ENCODE measurements at regions of chr12 and their contacts with region 1.

Region 1: GRCh38 chr12:53213348-53213747 is 6.3 kb upstream of the ITGB7 start:
- DNase-seq: peak; percentile 77 to 84 (median 78)
- H3K4me3 ChIP-seq: no peak overlapping the region
- H3K4me3 Mint-ChIP-seq: peak overlapping the region in 1 of 8 donors; percentile 41
- H3K27ac ChIP-seq: peak overlapping the region; percentile 36
- H3K27ac Mint-ChIP-seq: peak overlapping the region; percentile 46 to 97 (median 87)
- H3K4me1 ChIP-seq: peaks cover 84% of the 10 kb centered on the region
- H3K4me1 Mint-ChIP-seq: peaks cover 45 to 81% (median 68%) of the 10 kb centered on the region in 4 donors
- H3K27me3 ChIP-seq: no peaks in the 10 kb centered on the region
- H3K27me3 Mint-ChIP-seq: no peaks in the 10 kb centered on the region

Region 2: GRCh38 chr12:53115112-53115890 is 98.0 kb before region 1 on chr12:
- CTCF ChIA-PET with region 1: no interaction called
- POLR2A ChIA-PET with region 1: no interaction called
- intact Hi-C with region 1: no loop called
- DNase-seq: no peak
- H3K4me3 ChIP-seq: no peak overlapping the region
- H3K4me3 Mint-ChIP-seq: no peak overlapping the region
- H3K27ac ChIP-seq: no peak overlapping the region
- H3K27ac Mint-ChIP-seq: no peak overlapping the region
- H3K4me1 ChIP-seq: no peaks in the 10 kb centered on the region
- H3K4me1 Mint-ChIP-seq: no peaks in the 10 kb centered on the region
- H3K27me3 ChIP-seq: no peaks in the 10 kb centered on the region
- H3K27me3 Mint-ChIP-seq: no peaks in the 10 kb centered on the region

Region 3: GRCh38 chr12:53200458-53201176 is 12.7 kb before region 1 on chr12:
- CTCF ChIA-PET with region 1: interaction called, 27 read pairs
- POLR2A ChIA-PET with region 1: interaction called, 175 read pairs
- intact Hi-C with region 1: no loop called
- DNase-seq: no peak
- H3K4me3 ChIP-seq: peak overlapping the region; percentile 12 to 29
- H3K4me3 Mint-ChIP-seq: peak overlapping the region; percentile 66 to 89 (median 73)
- H3K27ac ChIP-seq: peak overlapping the region; percentile 41
- H3K27ac Mint-ChIP-seq: peak overlapping the region; percentile 73 to 95 (median 86)
- H3K4me1 ChIP-seq: peaks cover 95% of the 10 kb centered on the region
- H3K4me1 Mint-ChIP-seq: peaks cover 48 to 84% (median 66%) of the 10 kb centered on the region in 4 donors
- H3K27me3 ChIP-seq: no peaks in the 10 kb centered on the region
- H3K27me3 Mint-ChIP-seq: no peaks in the 10 kb centered on the region

Region 4: GRCh38 chr12:53241623-53242412 is 28.5 kb after region 1 on chr12:
- CTCF ChIA-PET with region 1: interaction called, 17 read pairs
- POLR2A ChIA-PET with region 1: interaction called, 333 read pairs
- intact Hi-C with region 1: no loop called
- DNase-seq: no peak
- H3K4me3 ChIP-seq: no peak overlapping the region
- H3K4me3 Mint-ChIP-seq: no peak overlapping the region
- H3K27ac ChIP-seq: no peak overlapping the region
- H3K27ac Mint-ChIP-seq: peak overlapping the region in 3 of 7 donors; percentile 48 to 83 (median 52)
- H3K4me1 ChIP-seq: peaks cover 10% of the 10 kb centered on the region
- H3K4me1 Mint-ChIP-seq: peaks cover 10 to 16% (median 14%) of the 10 kb centered on the region in 4 donors
- H3K27me3 ChIP-seq: no peaks in the 10 kb centered on the region
- H3K27me3 Mint-ChIP-seq: peaks cover 0 to 9% of the 10 kb centered on the region in 2 donors

Region 5: GRCh38 chr12:53267999-53268647 is 54.8 kb after region 1 on chr12 and contains the start of gene ESPL1:
- CTCF ChIA-PET with region 1: interaction called, 110 read pairs
- POLR2A ChIA-PET with region 1: interaction called, 45 read pairs
- intact Hi-C with region 1: loop called (anchors 1 kb)
- DNase-seq: peak; percentile 78 to 82 (median 81)
- H3K4me3 ChIP-seq: peak within 1 kb of the TSS; percentile 76 to 91
- H3K4me3 Mint-ChIP-seq: peak within 1 kb of the TSS; percentile 93 to 100 (median 96)
- H3K27ac ChIP-seq: peak within 1 kb of the TSS; percentile 71
- H3K27ac Mint-ChIP-seq: peak within 1 kb of the TSS; percentile 92 to 97 (median 95)
- H3K4me1 ChIP-seq: peaks cover 10% of the 10 kb centered on the region
- H3K4me1 Mint-ChIP-seq: peaks cover 11 to 29% (median 19%) of the 10 kb centered on the region in 4 donors
- H3K27me3 ChIP-seq: no peaks in the 10 kb centered on the region
- H3K27me3 Mint-ChIP-seq: no peaks in the 10 kb centered on the region
- total RNA-seq, gene ESPL1: 0.20 to 0.55 TPM

Region 6: DNA sequence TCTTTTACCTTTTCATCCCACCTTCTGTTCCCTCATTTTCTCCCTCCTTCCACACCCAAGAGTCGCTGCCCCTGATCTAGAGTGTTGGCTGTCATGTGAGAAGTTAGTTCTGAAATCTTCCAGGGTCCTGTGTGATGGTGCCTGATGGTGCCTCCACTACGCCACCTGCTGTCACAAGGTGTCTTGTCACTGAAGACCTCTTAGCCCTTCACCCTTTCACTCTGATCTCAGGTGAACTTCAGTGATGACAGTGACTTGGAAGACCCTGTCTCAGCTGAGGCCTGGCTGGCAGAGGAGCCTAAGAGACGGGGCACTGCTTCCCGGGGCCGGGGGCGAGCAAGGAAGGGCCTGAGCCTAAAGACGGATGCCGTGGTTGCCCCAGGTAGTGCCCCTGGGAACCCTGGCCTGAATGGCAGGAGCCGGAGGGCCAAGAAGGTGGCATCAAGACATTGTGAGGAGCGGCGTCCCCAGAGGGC is 74.4 kb after region 1 on chr12:
- CTCF ChIA-PET with region 1: interaction called, 339 read pairs
- POLR2A ChIA-PET with region 1: interaction called, 50 read pairs
- intact Hi-C with region 1: loop called (anchors 1 kb)
- DNase-seq: peak; percentile 68 to 73 (median 72)
- H3K4me3 ChIP-seq: no peak overlapping the region
- H3K4me3 Mint-ChIP-seq: peak overlapping the region in 1 of 8 donors; percentile 32
- H3K27ac ChIP-seq: no peak overlapping the region
- H3K27ac Mint-ChIP-seq: peak overlapping the region in 4 of 7 donors; percentile 3 to 71 (median 34)
- H3K4me1 ChIP-seq: no peaks in the 10 kb centered on the region
- H3K4me1 Mint-ChIP-seq: peaks cover 4 to 7% (median 5%) of the 10 kb centered on the region in 4 donors
- H3K27me3 ChIP-seq: no peaks in the 10 kb centered on the region
- H3K27me3 Mint-ChIP-seq: no peaks in the 10 kb centered on the region

Region 7: GRCh38 chr12:53892760-53893159 is 679.4 kb after region 1 on chr12:
- CTCF ChIA-PET with region 1: no interaction called
- POLR2A ChIA-PET with region 1: no interaction called
- intact Hi-C with region 1: no loop called
- DNase-seq: no peak
- H3K4me3 ChIP-seq: no peak overlapping the region
- H3K4me3 Mint-ChIP-seq: no peak overlapping the region
- H3K27ac ChIP-seq: no peak overlapping the region
- H3K27ac Mint-ChIP-seq: no peak overlapping the region
- H3K4me1 ChIP-seq: no peaks in the 10 kb centered on the region
- H3K4me1 Mint-ChIP-seq: no peaks in the 10 kb centered on the region
- H3K27me3 ChIP-seq: peaks cover 7% of the 10 kb centered on the region
- H3K27me3 Mint-ChIP-seq: peaks cover 56 to 66% of the 10 kb centered on the region in 2 donors

Measured in CD4-positive, alpha-beta memory T cell (primary cell).